Naive thymus-derived CD4-positive, alpha-beta T cell (primary cell): ENCODE measurements at regions of chr20 and their contacts with region 1.

Region 1: GRCh38 chr20:17504898-17505635 is 26.1 kb downstream of the BFSP1 start:
- DNase-seq: peak; percentile 13 to 70 (median 62)
- ATAC-seq: peak; percentile 85
- H3K4me3 ChIP-seq: peak overlapping the region; percentile 65
- H3K4me3 Mint-ChIP-seq: peak overlapping the region; percentile 82 to 95 (median 91)
- H3K27ac ChIP-seq: no peak overlapping the region
- H3K27ac Mint-ChIP-seq: peak overlapping the region in 8 of 9 donors; percentile 15 to 92 (median 82)
- H3K4me1 ChIP-seq: peaks cover 6 to 27% of the 10 kb centered on the region in 2 donors
- H3K4me1 Mint-ChIP-seq: peaks cover 10 to 57% (median 36%) of the 10 kb centered on the region in 7 donors
- H3K27me3 ChIP-seq: no peaks in the 10 kb centered on the region
- H3K27me3 Mint-ChIP-seq: peaks cover 0 to 19% (median 0%) of the 10 kb centered on the region in 5 donors

Region 2: DNA sequence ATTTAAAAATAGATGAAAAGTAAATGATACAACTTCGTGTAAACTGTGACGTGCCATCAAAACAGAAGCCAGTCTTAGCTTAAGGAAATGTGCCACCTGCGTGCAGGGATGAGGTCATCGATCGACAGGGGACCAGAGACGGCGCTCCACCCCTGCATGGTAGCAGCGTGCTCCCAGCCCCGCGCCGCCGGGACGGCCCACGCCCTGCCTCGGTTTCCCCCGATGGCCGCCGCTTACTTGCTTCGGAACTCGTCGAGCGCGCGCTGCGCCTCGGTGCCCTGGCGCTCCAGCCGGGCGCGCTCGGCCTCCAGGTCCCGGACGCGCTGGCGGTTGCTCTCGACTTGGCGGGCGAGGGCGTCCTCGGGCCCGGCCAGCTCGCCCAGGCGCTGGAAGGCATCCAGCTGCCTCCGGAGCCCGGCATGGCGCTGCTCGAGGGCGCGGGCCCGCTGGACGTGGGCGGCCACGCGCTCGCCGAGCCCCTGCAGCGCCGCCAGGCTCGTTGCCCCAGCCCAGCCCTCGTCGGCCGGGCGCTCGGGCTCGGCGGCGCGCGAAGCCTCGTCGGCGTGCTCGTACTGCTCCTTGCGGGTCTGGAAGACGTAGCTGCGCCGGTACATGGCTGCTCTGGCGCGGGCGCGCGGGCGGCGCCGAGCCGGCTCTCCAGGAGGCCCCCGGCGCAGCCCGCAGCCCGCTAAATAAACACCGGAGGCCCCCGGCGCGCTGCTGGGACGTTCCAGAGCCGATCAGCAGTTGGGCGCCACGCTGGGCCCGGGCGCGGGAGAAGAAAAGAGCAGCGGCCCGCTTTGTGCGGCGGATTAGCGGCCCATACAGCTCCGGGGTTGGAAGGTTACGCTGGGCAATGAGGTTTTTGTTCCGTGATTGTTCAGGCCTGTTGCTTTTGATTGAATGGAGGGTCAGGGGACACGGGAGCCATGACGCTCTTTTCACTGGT is 25.9 kb after region 1 on chr20 and contains the start of gene BFSP1:
- CTCF ChIA-PET with region 1: no interaction called
- POLR2A ChIA-PET with region 1: interaction called, 3 read pairs
- intact Hi-C with region 1: loop called in 1 of 2 experiments (anchors 1 kb)
- DNase-seq: peak in 6 of 9 donors; percentile 4 to 62 (median 26)
- ATAC-seq: peak; percentile 75
- H3K4me3 ChIP-seq: peak within 1 kb of the TSS; percentile 46
- H3K4me3 Mint-ChIP-seq: peak within 1 kb of the TSS; percentile 62 to 96 (median 82)
- H3K27ac ChIP-seq: no peak within 1 kb of the TSS
- H3K27ac Mint-ChIP-seq: peak within 1 kb of the TSS in 2 of 9 donors; percentile 64 to 95
- H3K4me1 ChIP-seq: peaks cover 0 to 5% of the 10 kb centered on the region in 2 donors
- H3K4me1 Mint-ChIP-seq: peaks cover 0 to 27% (median 9%) of the 10 kb centered on the region in 7 donors
- H3K27me3 ChIP-seq: peaks cover 0 to 6% of the 10 kb centered on the region in 2 donors
- H3K27me3 Mint-ChIP-seq: peaks cover 12 to 23% (median 17%) of the 10 kb centered on the region in 5 donors
- total RNA-seq, gene BFSP1: 0.42 to 3.4 TPM in 2 of 5 experiments, not detected in the others

Region 3: DNA sequence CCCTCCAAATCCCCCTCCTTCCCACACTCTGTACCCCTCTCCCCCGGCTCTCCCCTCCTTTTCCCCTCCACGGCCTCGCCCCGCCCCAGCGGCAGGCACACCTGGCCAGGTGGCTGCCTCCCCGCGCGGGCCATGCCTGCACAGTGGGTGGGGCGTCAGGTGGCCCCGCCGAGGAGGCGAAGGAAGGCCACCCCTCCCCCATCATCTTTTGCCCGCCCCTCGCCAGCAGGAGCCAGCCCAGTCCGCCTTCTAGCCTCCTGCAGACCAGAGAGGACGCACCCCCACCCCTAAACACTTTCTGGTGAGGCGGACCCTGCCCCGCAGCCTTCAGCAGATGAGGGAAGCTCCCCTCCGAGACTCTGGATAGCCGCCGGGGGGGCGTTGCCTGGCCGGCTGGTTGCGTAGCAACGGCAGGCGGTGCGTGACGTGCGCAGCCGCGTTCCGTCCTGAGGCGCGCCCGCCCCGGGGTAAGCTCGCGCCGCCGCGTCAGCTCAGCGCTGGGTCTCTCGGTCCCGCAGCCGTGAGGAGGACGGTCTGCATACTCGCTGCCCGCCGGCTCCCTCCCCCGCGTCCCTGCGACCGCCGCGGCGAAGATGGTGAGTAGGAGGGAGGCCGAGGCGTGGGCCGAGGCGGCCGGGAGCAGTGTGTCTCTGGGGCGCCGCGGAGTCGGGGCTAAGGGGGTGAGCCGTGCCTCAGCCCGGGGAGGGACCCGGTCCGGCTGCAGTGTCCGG is 64.7 kb after region 1 on chr20 and contains the start of gene DSTN:
- CTCF ChIA-PET with region 1: interaction called, 4 read pairs
- POLR2A ChIA-PET with region 1: no interaction called
- intact Hi-C with region 1: loop called (anchors 1 to 2 kb)
- DNase-seq: peak; percentile 83 to 91 (median 89)
- ATAC-seq: peak; percentile 95
- H3K4me3 ChIP-seq: peak within 1 kb of the TSS; percentile 94
- H3K4me3 Mint-ChIP-seq: peak within 1 kb of the TSS; percentile 82 to 97 (median 95)
- H3K27ac ChIP-seq: peak within 1 kb of the TSS; percentile 85
- H3K27ac Mint-ChIP-seq: peak within 1 kb of the TSS; percentile 80 to 96 (median 91)
- H3K4me1 ChIP-seq: peaks cover 5 to 11% of the 10 kb centered on the region in 2 donors
- H3K4me1 Mint-ChIP-seq: peaks cover 17 to 44% (median 31%) of the 10 kb centered on the region in 7 donors
- H3K27me3 ChIP-seq: no peaks in the 10 kb centered on the region
- H3K27me3 Mint-ChIP-seq: peaks cover 0 to 14% (median 0%) of the 10 kb centered on the region in 5 donors
- total RNA-seq, gene DSTN: 28.7 to 63.6 (median 33.9) TPM

Region 4: GRCh38 chr20:17648791-17649730 is 144.0 kb after region 1 on chr20:
- CTCF ChIA-PET with region 1: no interaction called
- POLR2A ChIA-PET with region 1: no interaction called
- intact Hi-C with region 1: loop called in 1 of 2 experiments (anchors 1 kb)
- DNase-seq: peak in 7 of 9 donors; percentile 14 to 54 (median 30)
- ATAC-seq: peak; percentile 67
- H3K4me3 ChIP-seq: no peak overlapping the region
- H3K4me3 Mint-ChIP-seq: peak overlapping the region in 2 of 10 donors; percentile 25 to 28
- H3K27ac ChIP-seq: no peak overlapping the region
- H3K27ac Mint-ChIP-seq: peak overlapping the region in 3 of 9 donors; percentile 67 to 85 (median 72)
- H3K4me1 ChIP-seq: no peaks in the 10 kb centered on the region
- H3K4me1 Mint-ChIP-seq: peaks cover 4 to 15% (median 8%) of the 10 kb centered on the region in 7 donors
- H3K27me3 ChIP-seq: no peaks in the 10 kb centered on the region
- H3K27me3 Mint-ChIP-seq: no peaks in the 10 kb centered on the region

Region 5: DNA sequence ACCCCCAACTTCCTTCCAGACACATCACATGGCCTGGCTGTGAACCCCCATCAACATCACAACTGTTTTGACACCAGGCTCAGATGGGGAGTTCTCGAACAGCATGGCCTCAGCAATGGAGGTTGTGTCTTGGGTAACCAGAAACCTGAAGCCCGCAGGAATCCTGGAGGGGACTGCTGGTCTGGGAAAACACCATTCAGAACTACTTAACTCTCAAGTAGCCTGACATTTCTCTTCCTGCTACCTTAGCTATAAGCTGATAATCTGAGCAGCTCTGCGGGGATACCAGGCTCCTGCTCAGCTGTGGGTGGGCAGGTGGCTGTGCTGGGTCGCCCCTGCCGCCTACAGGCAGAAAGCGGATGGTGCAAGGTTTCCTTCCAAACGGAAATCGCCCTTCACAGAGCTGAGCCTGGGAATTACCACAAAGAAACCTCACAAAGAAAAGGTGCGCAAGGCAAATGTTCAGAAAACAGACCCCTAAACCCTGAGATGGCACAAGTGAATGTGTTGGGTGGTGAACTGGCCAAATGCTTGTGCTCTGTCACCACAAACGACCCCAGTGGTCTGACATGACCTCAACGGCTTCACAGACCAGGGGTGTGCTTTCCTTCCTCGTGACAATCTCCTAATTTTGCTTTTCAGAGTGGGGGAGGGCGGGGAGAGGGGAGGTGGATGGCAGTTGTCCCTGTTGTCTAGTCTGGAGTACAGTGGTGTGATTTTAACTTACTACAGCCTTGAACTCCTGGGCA is 434.0 kb after region 1 on chr20:
- CTCF ChIA-PET with region 1: interaction called, 3 read pairs
- POLR2A ChIA-PET with region 1: no interaction called
- intact Hi-C with region 1: loop called (anchors 1 kb)
- DNase-seq: peak; percentile 18 to 53 (median 34)
- ATAC-seq: peak; percentile 91
- H3K4me3 ChIP-seq: no peak overlapping the region
- H3K4me3 Mint-ChIP-seq: peak overlapping the region in 6 of 10 donors; percentile 4 to 43 (median 37)
- H3K27ac ChIP-seq: no peak overlapping the region
- H3K27ac Mint-ChIP-seq: peak overlapping the region in 4 of 9 donors; percentile 34 to 68 (median 51)
- H3K4me1 ChIP-seq: peaks cover 5 to 9% of the 10 kb centered on the region in 2 donors
- H3K4me1 Mint-ChIP-seq: peaks cover 0 to 22% (median 12%) of the 10 kb centered on the region in 7 donors
- H3K27me3 ChIP-seq: no peaks in the 10 kb centered on the region
- H3K27me3 Mint-ChIP-seq: no peaks in the 10 kb centered on the region

Region 6: DNA sequence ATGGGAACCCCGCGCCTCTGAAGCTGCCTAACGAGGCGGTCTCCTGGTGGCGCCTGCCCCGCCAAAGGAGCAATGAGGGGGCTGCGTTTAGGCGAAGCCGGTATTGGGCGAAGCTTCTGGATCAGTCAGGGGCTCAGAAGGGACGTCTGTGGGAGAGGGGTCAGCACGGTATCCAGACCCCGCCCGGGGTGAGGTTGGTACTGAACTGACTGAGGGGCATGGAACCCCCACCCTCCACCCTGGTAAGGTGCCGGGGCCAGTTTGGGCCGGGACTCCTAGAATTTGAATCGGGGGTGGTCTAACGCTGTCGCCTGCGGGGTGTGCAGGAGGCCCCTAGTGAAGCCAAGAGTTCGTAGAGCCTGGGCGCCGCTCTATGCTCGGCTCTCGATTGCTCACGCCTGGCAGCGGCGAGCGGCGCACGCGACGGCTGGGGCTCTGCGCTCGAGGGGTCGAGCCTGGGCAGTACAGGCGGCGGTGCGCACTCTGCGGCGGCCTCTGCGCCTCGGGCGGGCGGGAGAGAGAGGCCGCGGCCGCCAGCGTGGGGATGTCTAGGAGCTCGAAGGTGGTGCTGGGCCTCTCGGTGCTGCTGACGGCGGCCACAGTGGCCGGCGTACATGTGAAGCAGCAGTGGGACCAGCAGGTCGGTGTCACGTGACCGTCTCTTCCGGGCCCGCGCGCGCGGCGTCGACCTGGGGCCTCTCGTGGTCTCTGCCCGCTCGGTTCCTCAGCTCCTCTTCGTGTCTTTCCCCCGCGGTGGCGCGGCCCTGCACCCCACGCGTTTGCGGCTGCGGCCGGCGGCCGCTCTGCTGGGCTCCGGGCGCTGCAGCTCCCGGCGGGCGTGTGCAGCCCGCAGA is 632.6 kb after region 1 on chr20 and contains the starts of genes KAT14 and PET117:
- CTCF ChIA-PET with region 1: no interaction called
- POLR2A ChIA-PET with region 1: no interaction called
- intact Hi-C with region 1: loop called (anchors 2 to 10 kb)
- DNase-seq: peak; percentile 85 to 96 (median 93)
- ATAC-seq: peak; percentile 98
- H3K4me3 ChIP-seq: peak within 1 kb of the TSS; percentile 99
- H3K4me3 Mint-ChIP-seq: peak within 1 kb of the TSS; percentile 76 to 92 (median 88)
- H3K27ac ChIP-seq: peak within 1 kb of the TSS; percentile 89
- H3K27ac Mint-ChIP-seq: peak within 1 kb of the TSS; percentile 85 to 95 (median 92)
- H3K4me1 ChIP-seq: peaks cover 13 to 15% of the 10 kb centered on the region in 2 donors
- H3K4me1 Mint-ChIP-seq: peaks cover 23 to 44% (median 31%) of the 10 kb centered on the region in 7 donors
- H3K27me3 ChIP-seq: no peaks in the 10 kb centered on the region
- H3K27me3 Mint-ChIP-seq: peaks cover 0 to 7% (median 0%) of the 10 kb centered on the region in 5 donors
- total RNA-seq, gene KAT14: 12.3 to 26.7 (median 16.2) TPM
- total RNA-seq, gene PET117: 9.0 to 20.3 (median 11.7) TPM

Region 7: DNA sequence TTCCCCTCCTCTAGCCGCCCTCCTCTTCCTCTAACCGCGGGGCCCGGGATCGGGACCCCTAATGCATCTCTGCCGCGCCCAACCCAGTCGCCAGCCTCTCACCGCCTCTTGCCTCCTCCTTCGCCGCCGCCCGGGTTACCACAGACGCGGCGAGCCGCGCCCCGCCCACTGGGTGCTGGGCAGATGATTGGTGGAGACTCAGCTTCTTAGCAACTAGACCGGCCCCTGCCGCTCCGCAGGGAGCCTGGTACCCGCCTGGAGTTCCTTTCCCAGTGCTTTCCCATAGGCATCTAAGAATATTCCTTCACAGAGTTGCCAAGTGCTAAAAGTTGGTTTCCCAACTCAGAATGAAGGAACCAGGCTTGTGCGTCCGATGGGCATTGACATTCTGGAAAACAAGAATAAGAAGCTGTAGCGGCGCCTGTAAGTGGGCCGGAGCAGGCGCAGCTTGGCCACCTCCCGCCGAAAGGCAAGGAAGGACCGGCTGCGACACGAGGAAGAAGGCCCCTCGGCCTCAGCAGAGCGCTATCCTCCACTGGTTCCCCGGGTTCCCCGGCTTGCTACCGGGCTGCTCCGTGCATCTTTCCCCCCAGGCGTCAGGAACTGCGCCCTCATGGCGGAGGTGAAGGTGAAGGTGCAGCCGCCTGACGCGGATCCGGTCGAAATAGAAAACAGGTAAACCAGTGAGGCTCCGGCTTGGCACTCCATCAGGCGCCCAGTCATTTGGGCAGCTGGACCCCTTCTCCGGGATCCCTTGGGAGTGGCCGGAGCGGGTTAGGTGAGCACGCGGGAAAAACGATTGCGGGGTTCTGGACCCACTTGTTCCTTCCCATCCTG is 962.0 kb after region 1 on chr20 and contains the starts of genes DZANK1 and POLR3F:
- CTCF ChIA-PET with region 1: no interaction called
- POLR2A ChIA-PET with region 1: no interaction called
- intact Hi-C with region 1: loop called in 1 of 2 experiments (anchors 1 kb)
- DNase-seq: peak; percentile 85 to 93 (median 92)
- ATAC-seq: peak; percentile 97
- H3K4me3 ChIP-seq: peak within 1 kb of the TSS; percentile 93
- H3K4me3 Mint-ChIP-seq: peak within 1 kb of the TSS; percentile 89 to 99 (median 97)
- H3K27ac ChIP-seq: peak within 1 kb of the TSS; percentile 77
- H3K27ac Mint-ChIP-seq: peak within 1 kb of the TSS; percentile 93 to 99 (median 98)
- H3K4me1 ChIP-seq: peaks cover 7 to 14% of the 10 kb centered on the region in 2 donors
- H3K4me1 Mint-ChIP-seq: peaks cover 25 to 44% (median 37%) of the 10 kb centered on the region in 7 donors
- H3K27me3 ChIP-seq: no peaks in the 10 kb centered on the region
- H3K27me3 Mint-ChIP-seq: no peaks in the 10 kb centered on the region
- total RNA-seq, gene DZANK1: 1.2 to 3.5 (median 2.9) TPM
- total RNA-seq, gene POLR3F: 5.0 to 13.5 (median 11.5) TPM